ENCODE measurements at regions of chr17 and their contacts with region 1.

Region 1: GRCh38 chr17:31100840-31101459 is 6.2 kb downstream of the NF1 start:
- DNase-seq: no peak
- ATAC-seq: no peak
- H3K4me3 ChIP-seq: no peak overlapping the region
- H3K27ac ChIP-seq: no peak overlapping the region
- H3K4me1 ChIP-seq: peaks cover 4% of the 10 kb centered on the region
- H3K27me3 ChIP-seq: no peaks in the 10 kb centered on the region
- CTCF ChIP-seq: no peak
- POLR2A ChIP-seq: no peak
- RAD21 ChIP-seq: no peak

Region 2: GRCh38 chr17:31147507-31148202 is 46.7 kb after region 1 on chr17:
- CTCF ChIA-PET with region 1: no interaction called
- POLR2A ChIA-PET with region 1: no interaction called
- dilution Hi-C with region 1: no loop called
- in situ Hi-C with region 1: no loop called
- intact Hi-C with region 1: loop called (anchors 5 kb)
- DNase-seq: no peak
- ATAC-seq: no peak
- H3K4me3 ChIP-seq: no peak overlapping the region
- H3K27ac ChIP-seq: no peak overlapping the region
- H3K4me1 ChIP-seq: peaks cover 4% of the 10 kb centered on the region; the same call in 1 of the 2 replicates
- H3K27me3 ChIP-seq: no peaks in the 10 kb centered on the region
- CTCF ChIP-seq: no peak
- POLR2A ChIP-seq: no peak
- RAD21 ChIP-seq: no peak

Measured in IMR-90 (cell line).